ENCODE measurements at regions of chr7 and their contacts with region 1.

Region 1: DNA sequence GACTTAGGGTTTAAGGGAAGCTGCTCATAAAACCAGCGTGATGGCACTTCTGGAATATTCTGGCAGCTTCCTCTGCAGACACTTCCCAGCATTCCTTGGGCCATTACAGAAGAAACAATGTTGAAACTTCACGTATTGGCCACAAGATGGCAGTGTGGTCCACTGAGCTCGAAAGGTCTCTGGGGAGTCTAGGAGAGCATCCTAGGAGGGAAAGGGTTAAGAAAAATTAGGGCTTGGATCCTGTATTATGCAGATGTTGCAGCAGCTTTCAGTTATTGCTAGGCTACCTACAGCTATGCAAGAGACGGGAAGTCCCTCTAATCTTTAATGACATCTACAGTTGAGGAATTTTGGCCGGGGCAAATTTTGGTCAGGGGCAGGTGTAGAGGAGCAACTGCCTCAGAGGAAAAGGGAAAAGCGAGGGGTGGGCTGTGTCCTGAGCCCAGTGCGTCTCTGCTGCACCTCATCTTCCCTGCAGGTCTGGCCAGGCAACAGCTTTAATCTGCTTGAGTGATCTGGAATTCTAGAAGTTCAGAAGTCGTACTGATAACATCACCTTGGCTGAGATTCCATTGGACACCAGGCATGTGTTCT is 220.7 kb upstream of the PRSS58 start:
- DNase-seq: peak; percentile 48
- H3K4me3 Mint-ChIP-seq: no peak overlapping the region
- H3K27ac Mint-ChIP-seq: peak overlapping the region; percentile 49
- H3K4me1 Mint-ChIP-seq: peaks cover 76% of the 10 kb centered on the region
- H3K27me3 Mint-ChIP-seq: no peaks in the 10 kb centered on the region

Region 2: GRCh38 chr7:142385491-142386340 is 92.9 kb before region 1 on chr7:
- CTCF ChIA-PET with region 1: interaction called, 15 read pairs
- POLR2A ChIA-PET with region 1: no interaction called
- intact Hi-C with region 1: loop called (anchors 10 kb)
- DNase-seq: peak; percentile 69
- H3K4me3 Mint-ChIP-seq: peak overlapping the region; percentile 60
- H3K27ac Mint-ChIP-seq: peak overlapping the region; percentile 50
- H3K4me1 Mint-ChIP-seq: peaks cover 21% of the 10 kb centered on the region
- H3K27me3 Mint-ChIP-seq: no peaks in the 10 kb centered on the region

Region 3: DNA sequence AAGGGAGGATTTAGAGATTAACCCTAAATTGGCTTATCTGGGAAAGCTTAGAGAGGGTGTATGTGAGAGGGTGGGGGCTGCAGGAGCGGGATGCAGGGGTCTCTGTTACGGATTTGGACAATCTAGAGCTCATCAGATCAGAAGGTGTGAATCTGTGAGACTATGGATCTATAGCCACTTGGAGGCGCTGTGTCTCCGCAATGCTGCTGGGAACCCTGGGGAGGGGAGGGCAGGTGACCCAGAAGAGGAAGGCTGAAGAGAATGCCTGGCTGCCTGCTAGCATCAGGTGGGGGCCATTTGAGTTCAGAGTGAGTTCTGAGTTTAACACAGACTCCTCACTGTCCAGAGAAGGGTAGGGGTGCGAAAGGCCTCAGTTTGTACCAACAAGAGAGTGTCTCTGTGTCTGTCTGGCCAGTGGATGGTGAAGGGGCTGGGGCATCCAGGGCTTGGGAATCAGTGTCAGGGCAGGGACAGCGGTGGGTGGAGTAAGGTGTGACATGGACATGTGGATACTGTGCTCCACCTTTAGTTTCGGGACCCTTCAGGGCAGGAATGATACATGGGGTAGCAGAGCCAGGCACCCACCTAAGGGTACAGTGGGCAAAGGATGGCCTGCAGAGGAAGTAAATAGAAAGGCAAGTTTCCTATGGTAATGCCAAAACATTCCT is 33.4 kb before region 1 on chr7:
- CTCF ChIA-PET with region 1: interaction called, 7 read pairs
- POLR2A ChIA-PET with region 1: no interaction called
- intact Hi-C with region 1: loop called (anchors 2 kb)
- DNase-seq: peak; percentile 53
- H3K4me3 Mint-ChIP-seq: no peak overlapping the region
- H3K27ac Mint-ChIP-seq: peak overlapping the region; percentile 26
- H3K4me1 Mint-ChIP-seq: peaks cover 31% of the 10 kb centered on the region
- H3K27me3 Mint-ChIP-seq: peaks cover 2% of the 10 kb centered on the region

Region 4: GRCh38 chr7:142496545-142497041 is 18.0 kb after region 1 on chr7:
- CTCF ChIA-PET with region 1: interaction called, 100 read pairs
- POLR2A ChIA-PET with region 1: no interaction called
- intact Hi-C with region 1: no loop called
- DNase-seq: peak; percentile 39
- H3K4me3 Mint-ChIP-seq: peak overlapping the region; percentile 47
- H3K27ac Mint-ChIP-seq: peak overlapping the region; percentile 7
- H3K4me1 Mint-ChIP-seq: peaks cover 34% of the 10 kb centered on the region
- H3K27me3 Mint-ChIP-seq: no peaks in the 10 kb centered on the region

Region 5: GRCh38 chr7:142720986-142721385 is 242.4 kb after region 1 on chr7:
- CTCF ChIA-PET with region 1: no interaction called
- POLR2A ChIA-PET with region 1: no interaction called
- intact Hi-C with region 1: no loop called
- DNase-seq: no peak
- H3K4me3 Mint-ChIP-seq: peak overlapping the region; percentile 63
- H3K27ac Mint-ChIP-seq: peak overlapping the region; percentile 69
- H3K4me1 Mint-ChIP-seq: peaks cover 19% of the 10 kb centered on the region
- H3K27me3 Mint-ChIP-seq: no peaks in the 10 kb centered on the region

Measured in activated CD4-positive, alpha-beta memory T cell treated with anti-CD3 and anti-CD28 coated beads for 36 hours (primary cell).